ENCODE measurements at regions of chr14 and their contacts with region 1.

Region 1: GRCh38 chr14:30214461-30215090 is 286.9 kb upstream of the PRKD1 start:
- DNase-seq: peak; percentile 65
- H3K4me3 ChIP-seq: no peak overlapping the region
- H3K27ac ChIP-seq: no peak overlapping the region
- H3K4me1 ChIP-seq: peaks cover 4% of the 10 kb centered on the region
- H3K27me3 ChIP-seq: no peaks in the 10 kb centered on the region
- CTCF ChIP-seq: peak; percentile 39 to 41
- POLR2A ChIP-seq: no peak

Region 2: DNA sequence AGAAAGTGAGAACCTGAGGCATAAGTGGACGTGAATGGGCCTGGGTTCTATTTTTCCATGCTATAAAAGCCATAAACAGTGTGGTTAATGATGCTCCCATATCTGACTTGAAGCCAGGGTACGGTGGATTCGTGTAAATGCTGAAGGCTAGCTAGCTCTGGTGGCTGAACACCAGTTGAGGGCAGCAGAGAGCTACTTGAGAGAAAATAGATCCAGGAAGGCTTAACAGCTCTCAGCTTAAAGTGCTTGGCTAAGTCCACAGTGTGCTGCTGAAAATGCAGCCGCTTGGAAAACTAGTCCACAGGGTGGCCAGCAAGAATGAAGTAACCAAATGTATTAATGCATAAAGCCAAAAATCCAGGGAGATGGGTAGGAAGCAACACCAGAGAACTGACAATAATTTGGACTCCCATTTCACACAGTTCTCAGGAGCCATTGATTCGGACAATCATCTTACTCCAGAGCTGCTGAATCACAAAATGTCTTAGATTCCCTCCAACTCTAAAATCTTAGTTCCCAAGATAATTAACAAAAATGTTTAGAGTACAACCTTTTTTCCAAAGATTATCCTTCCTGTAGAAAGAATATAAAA is 1463.0 kb before region 1 on chr14:
- CTCF ChIA-PET with region 1: interaction called, 51 read pairs
- POLR2A ChIA-PET with region 1: no interaction called
- dilution Hi-C with region 1: no loop called
- intact Hi-C with region 1: no loop called
- DNase-seq: peak; percentile 50
- H3K4me3 ChIP-seq: no peak overlapping the region
- H3K27ac ChIP-seq: no peak overlapping the region
- H3K4me1 ChIP-seq: no peaks in the 10 kb centered on the region
- H3K27me3 ChIP-seq: peaks cover 24 to 34% of the 10 kb centered on the region in 2 experiments
- CTCF ChIP-seq: peak; percentile 62 to 71
- POLR2A ChIP-seq: no peak

Region 3: DNA sequence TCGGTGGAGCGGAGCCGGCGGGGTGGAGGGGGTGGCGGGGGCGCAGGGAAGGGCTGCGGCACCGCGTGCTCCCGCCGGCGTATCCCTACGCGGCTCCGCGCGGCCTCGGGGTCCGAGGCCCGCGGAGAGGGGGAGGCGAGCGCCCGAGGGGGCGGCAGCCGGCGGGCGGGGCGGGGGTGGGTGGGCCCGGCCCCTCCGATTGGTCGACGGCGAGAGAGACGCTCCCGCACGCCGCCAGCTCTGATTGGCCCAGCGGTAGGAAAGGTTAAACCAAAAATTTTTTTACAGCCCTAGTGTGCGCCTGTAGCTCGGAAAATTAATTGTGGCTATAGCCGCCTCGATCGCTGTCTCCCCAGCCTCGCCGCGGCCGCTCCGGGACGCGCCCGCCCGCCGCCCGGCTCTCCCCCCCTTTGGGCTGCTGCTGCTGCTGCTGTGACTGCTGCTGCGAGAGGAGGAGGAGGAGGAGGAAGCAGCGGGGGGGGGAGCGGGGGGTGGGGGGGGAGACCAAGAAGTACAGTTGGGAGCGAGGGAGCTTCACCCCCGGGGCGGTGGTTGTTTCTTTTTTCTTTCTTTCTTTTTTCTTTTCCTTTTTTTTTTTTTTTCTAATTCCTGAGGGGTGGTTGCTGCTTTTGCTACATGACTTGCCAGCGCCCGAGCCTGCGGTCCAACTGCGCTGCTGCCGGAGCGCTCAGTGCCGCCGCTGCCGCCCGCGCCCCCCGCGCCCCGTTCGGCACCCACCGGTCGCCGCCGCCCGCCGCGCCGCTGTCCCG is 1447.9 kb before region 1 on chr14 and contains the start of gene FOXG1:
- CTCF ChIA-PET with region 1: interaction called, 11 read pairs
- POLR2A ChIA-PET with region 1: no interaction called
- dilution Hi-C with region 1: no loop called
- intact Hi-C with region 1: no loop called
- DNase-seq: no peak
- H3K4me3 ChIP-seq: peak within 1 kb of the TSS in 2 of 3 experiments; percentile 24 to 29
- H3K27ac ChIP-seq: no peak within 1 kb of the TSS
- H3K4me1 ChIP-seq: peaks cover 5% of the 10 kb centered on the region
- H3K27me3 ChIP-seq: peaks cover 51 to 88% of the 10 kb centered on the region in 2 experiments
- CTCF ChIP-seq: no peak
- POLR2A ChIP-seq: no peak
- total RNA-seq, gene FOXG1: not detected in 2 replicates

Region 4: DNA sequence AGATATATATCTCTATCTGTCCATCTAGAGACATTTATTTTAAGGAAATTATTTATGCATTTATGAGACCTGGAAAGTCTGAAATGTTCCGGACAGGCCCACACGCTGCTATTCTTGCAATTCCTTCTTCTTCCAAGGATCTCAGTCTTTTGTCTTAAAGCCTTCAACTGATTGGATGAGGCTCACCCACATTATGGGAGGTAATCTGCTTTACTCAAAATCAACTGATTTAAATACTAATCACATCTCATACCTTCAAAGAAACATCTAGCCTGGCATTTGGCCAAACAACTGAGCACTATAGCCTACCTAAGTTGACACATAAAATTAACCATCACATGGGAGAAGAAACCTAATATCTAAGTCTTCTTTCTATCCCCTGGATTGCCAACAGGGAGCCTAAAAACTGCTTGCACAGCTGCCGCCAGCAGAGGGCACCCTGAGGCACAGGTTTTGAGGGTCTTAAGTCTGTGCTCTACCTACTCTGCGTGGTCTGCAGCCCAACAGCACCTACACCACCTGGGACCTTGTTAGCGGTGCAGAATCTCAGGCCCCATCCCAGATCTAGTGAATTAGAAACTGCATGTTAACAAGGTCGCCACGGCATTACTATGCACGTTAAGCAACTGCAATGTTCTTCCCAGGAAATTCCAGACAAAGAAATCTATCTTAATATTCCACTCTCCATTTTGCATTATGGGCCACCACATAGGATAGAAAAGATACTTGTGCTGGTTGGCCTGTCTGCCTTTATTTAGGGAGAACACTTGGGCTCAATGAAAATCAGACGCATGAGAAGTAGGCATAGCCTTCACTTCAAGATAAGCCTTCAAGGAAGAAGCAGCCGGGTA is 1198.3 kb before region 1 on chr14:
- CTCF ChIA-PET with region 1: no interaction called
- POLR2A ChIA-PET with region 1: no interaction called
- dilution Hi-C with region 1: no loop called
- intact Hi-C with region 1: loop called (anchors 5 kb)
- DNase-seq: peak; percentile 60
- H3K4me3 ChIP-seq: no peak overlapping the region
- H3K27ac ChIP-seq: no peak overlapping the region
- H3K4me1 ChIP-seq: no peaks in the 10 kb centered on the region
- H3K27me3 ChIP-seq: peaks cover 0 to 4% of the 10 kb centered on the region in 2 experiments
- CTCF ChIP-seq: peak; percentile 69 to 75
- POLR2A ChIP-seq: no peak

Region 5: DNA sequence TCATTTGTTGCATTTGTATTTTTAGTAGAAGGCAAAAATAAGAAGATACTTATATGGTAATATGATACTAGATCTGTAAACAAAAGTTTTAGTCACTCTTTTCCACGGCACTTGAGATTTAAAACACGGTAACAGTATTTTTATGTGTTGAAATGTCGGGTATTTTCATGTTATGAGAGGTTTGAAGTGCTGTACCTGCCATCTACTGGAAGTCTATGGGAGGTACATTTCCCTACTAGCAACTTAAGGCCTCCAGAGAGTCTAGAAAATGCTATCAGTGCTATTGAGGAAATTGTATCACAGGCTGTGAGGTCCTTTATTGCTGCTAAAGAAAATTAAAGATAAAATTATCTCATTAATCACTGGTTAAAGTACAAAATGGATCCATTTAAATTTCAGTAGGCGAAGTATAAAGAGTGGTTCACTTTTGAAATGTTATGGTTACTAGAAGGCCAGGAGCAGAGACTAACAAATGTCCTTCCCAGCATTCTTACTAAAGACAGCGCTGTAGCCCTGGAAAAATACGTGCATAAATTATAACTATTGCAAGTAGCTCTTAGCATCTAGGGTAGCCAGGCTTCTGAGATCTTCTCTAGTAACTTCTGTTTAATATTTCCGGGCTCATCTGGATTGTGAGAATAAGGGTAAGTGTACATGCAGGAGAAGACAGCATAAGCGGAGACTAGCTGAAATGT is 209.3 kb before region 1 on chr14:
- CTCF ChIA-PET with region 1: interaction called, 9 read pairs
- POLR2A ChIA-PET with region 1: no interaction called
- dilution Hi-C with region 1: no loop called
- intact Hi-C with region 1: loop called (anchors 2 kb)
- DNase-seq: peak; percentile 53
- H3K4me3 ChIP-seq: no peak overlapping the region
- H3K27ac ChIP-seq: no peak overlapping the region
- H3K4me1 ChIP-seq: no peaks in the 10 kb centered on the region
- H3K27me3 ChIP-seq: peaks cover 0 to 6% of the 10 kb centered on the region in 2 experiments
- CTCF ChIP-seq: peak; percentile 29 to 56
- POLR2A ChIP-seq: no peak

Region 6: GRCh38 chr14:30283826-30284446 is 69.4 kb after region 1 on chr14:
- CTCF ChIA-PET with region 1: interaction called, 31 read pairs
- POLR2A ChIA-PET with region 1: no interaction called
- dilution Hi-C with region 1: no loop called
- intact Hi-C with region 1: no loop called
- DNase-seq: peak; percentile 60
- H3K4me3 ChIP-seq: no peak overlapping the region
- H3K27ac ChIP-seq: no peak overlapping the region
- H3K4me1 ChIP-seq: no peaks in the 10 kb centered on the region
- H3K27me3 ChIP-seq: no peaks in the 10 kb centered on the region
- CTCF ChIP-seq: peak; percentile 66 to 68
- POLR2A ChIP-seq: no peak

Region 7: DNA sequence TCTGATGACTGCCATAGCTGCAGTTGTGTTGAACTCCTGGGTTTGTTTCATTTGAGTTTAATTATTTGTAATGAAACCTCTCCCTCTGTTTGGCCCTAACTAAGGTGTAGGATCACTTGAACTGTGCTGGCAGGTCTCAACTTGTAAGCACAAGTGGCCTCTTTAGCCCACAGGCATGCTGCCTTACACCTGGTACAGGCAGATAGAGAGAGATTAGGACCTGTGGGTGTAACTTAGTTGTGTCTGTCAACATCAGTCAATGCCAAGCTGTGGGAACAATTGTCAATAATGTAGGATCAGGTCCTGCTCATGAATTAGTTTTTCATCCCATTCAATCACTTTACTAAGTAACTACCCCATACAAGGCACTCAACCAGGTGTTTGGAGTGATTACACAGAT is 81.4 kb after region 1 on chr14:
- CTCF ChIA-PET with region 1: no interaction called
- POLR2A ChIA-PET with region 1: no interaction called
- dilution Hi-C with region 1: no loop called
- intact Hi-C with region 1: no loop called
- DNase-seq: no peak
- H3K4me3 ChIP-seq: no peak overlapping the region
- H3K27ac ChIP-seq: no peak overlapping the region
- H3K4me1 ChIP-seq: no peaks in the 10 kb centered on the region
- H3K27me3 ChIP-seq: peaks cover 0 to 3% of the 10 kb centered on the region in 2 experiments
- CTCF ChIP-seq: no peak
- POLR2A ChIP-seq: no peak

Region 8: GRCh38 chr14:30333934-30334333 is 119.4 kb after region 1 on chr14:
- CTCF ChIA-PET with region 1: no interaction called
- POLR2A ChIA-PET with region 1: no interaction called
- dilution Hi-C with region 1: no loop called
- intact Hi-C with region 1: no loop called
- DNase-seq: no peak
- H3K4me3 ChIP-seq: no peak overlapping the region
- H3K27ac ChIP-seq: no peak overlapping the region
- H3K4me1 ChIP-seq: no peaks in the 10 kb centered on the region
- H3K27me3 ChIP-seq: no peaks in the 10 kb centered on the region
- CTCF ChIP-seq: no peak
- POLR2A ChIP-seq: no peak